Activated T-helper 1 cell treated with anti-CD3 and anti-CD28 coated beads, Interleukin-12 subunit alpha, Interleukin-12 subunit beta, Interleukin-2, Interleukin-4 antibody, amounts not matched to agents 30 ng/mL and 10 ng/mL and 1 ng/mL, durations not matched to agents 14 hours and 24 hours and 36 hours (primary cell): ENCODE measurements at regions of chr5 and their contacts with region 1.

Region 1: DNA sequence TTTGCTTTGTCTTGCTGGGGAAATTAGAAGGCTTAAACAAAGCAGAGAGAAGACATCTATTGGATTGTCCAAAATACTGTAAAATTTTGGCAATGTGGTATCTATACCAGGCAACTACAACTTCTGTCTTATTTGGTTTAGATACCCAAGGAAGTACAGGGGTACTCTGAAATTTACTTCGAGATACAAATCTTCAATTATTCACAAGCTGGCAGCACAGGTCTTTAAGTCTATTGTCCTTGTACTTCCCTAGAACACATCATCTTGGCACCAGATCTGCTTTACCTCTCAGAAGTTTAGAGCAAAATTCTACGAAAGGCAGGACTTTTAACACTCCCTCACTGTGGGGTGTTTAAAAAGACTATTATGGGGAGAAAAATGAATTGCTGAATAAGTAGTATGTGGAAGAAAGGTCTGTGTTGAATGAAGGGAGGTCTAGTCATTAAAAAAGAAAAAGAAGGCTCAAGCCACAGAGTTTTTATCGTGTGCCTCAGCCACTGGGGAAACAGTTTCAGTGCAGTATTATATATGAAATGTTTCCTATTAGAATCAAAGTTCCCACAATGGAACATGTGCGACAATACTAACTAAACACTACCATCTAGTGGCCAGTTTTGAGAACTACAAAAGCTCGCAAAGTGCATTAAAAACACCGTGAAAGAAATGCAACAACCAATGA is 93.7 kb downstream of the PDE4D start:
- DNase-seq: peak; percentile 15
- H3K4me3 Mint-ChIP-seq: no peak overlapping the region
- H3K27ac Mint-ChIP-seq: no peak overlapping the region
- H3K4me1 Mint-ChIP-seq: no peaks in the 10 kb centered on the region
- H3K27me3 Mint-ChIP-seq: peaks cover 11% of the 10 kb centered on the region

Region 2: GRCh38 chr5:59020611-59021285 is 779.1 kb before region 1 on chr5:
- intact Hi-C with region 1: loop called (anchors 10 kb)
- DNase-seq: no peak
- H3K4me3 Mint-ChIP-seq: peak overlapping the region; percentile 15
- H3K27ac Mint-ChIP-seq: peak overlapping the region; percentile 94
- H3K4me1 Mint-ChIP-seq: peaks cover 75% of the 10 kb centered on the region
- H3K27me3 Mint-ChIP-seq: no peaks in the 10 kb centered on the region

Region 3: DNA sequence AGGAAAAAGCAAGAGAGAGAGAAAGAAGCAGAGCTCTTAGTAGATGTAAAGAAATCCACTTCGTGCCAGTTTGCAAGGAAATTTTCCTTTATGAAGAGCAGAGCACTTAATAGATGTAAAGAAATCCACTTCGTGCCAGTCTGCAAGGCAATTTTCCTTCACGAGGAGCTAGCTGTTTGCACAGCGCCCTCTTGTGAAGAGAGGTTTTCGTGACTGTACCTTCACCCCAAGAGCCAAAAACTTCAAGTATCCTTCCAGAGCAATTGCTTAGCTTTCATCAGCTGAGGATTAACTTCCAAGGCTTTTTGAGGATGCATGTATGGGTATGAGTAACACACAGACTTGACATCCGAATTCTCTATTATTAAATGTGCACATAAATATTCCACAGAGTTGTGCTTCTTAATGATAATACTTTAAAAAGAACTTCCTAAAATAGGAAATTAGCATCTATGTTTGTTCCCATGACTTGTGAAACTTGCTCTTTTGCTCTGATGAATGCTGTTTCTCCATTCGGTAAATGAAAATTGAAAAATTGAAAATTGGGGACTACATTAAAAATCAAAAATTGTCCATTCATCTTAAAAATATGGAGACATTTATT is 431.9 kb before region 1 on chr5:
- intact Hi-C with region 1: no loop called
- DNase-seq: no peak
- H3K4me3 Mint-ChIP-seq: no peak overlapping the region
- H3K27ac Mint-ChIP-seq: no peak overlapping the region
- H3K4me1 Mint-ChIP-seq: no peaks in the 10 kb centered on the region
- H3K27me3 Mint-ChIP-seq: peaks cover 27% of the 10 kb centered on the region

Region 4: DNA sequence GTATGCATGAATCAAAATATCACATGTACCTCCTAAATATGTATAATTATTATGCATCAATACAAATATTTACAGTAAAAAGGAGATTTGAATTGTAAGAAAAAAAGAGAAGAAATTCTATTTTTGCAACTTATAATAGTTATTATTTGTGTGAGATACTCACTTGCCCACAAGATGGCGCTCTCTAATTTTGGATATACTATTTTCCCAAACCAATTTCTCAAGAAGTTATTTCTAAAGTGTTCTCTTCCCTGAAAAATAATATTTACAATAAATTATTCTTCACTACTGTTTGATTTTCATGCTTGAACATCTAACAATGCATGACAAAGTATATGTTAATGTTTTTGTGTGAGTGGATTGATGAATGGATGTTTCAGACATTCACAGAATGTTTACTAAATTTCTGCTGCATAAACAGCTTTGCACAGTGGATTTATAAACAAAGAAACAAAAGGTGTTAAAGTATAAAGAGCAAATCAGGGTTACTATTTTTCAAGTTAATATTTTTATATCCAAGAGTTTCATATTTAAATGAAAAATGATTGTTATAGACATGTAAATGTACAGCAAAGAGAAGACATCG is 409.6 kb before region 1 on chr5:
- intact Hi-C with region 1: loop called (anchors 1 kb)
- DNase-seq: no peak
- H3K4me3 Mint-ChIP-seq: no peak overlapping the region
- H3K27ac Mint-ChIP-seq: no peak overlapping the region
- H3K4me1 Mint-ChIP-seq: no peaks in the 10 kb centered on the region
- H3K27me3 Mint-ChIP-seq: peaks cover 20% of the 10 kb centered on the region

Region 5: DNA sequence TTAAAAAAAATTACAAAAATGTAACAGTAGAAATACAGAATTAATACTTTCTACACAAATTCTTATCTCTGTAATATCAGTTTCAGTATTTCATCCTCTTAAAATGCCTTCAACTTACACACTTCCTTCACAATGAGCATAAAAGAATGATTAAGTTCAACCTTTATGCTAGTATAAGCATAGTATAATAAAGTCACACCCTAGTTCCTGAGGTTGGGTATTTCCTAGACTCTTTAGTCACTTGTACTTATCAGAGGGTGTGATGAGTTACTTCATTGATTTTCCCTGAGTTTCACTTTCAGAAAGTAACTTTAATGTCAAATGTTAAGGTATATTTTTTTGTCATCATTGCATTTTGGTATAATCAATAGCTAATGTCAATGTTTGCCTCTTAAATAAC is 208.6 kb before region 1 on chr5:
- intact Hi-C with region 1: loop called (anchors 5 kb)
- DNase-seq: no peak
- H3K4me3 Mint-ChIP-seq: peak overlapping the region; percentile 30
- H3K27ac Mint-ChIP-seq: no peak overlapping the region
- H3K4me1 Mint-ChIP-seq: peaks cover 55% of the 10 kb centered on the region
- H3K27me3 Mint-ChIP-seq: peaks cover 13% of the 10 kb centered on the region

Region 6: DNA sequence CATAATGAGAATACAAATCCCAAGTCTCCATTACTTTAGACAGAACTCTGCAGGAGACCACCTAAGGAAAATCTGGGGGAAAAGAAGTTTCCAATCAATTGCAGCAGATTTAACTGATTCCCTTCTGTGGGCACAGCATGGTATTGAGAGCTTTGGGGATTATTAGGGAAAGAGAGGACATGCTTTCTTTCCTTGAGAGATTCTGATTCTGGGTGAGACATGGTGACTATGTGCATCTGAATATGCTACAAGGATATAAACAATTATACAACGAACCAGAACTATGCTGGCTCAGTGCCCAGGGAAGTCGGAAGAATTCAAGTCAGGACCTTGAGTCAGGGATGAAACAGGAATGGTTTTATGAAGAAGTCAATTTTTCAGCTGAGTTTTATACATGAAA is 90.0 kb before region 1 on chr5:
- intact Hi-C with region 1: no loop called
- DNase-seq: no peak
- H3K4me3 Mint-ChIP-seq: no peak overlapping the region
- H3K27ac Mint-ChIP-seq: no peak overlapping the region
- H3K4me1 Mint-ChIP-seq: no peaks in the 10 kb centered on the region
- H3K27me3 Mint-ChIP-seq: peaks cover 3% of the 10 kb centered on the region

Region 7: DNA sequence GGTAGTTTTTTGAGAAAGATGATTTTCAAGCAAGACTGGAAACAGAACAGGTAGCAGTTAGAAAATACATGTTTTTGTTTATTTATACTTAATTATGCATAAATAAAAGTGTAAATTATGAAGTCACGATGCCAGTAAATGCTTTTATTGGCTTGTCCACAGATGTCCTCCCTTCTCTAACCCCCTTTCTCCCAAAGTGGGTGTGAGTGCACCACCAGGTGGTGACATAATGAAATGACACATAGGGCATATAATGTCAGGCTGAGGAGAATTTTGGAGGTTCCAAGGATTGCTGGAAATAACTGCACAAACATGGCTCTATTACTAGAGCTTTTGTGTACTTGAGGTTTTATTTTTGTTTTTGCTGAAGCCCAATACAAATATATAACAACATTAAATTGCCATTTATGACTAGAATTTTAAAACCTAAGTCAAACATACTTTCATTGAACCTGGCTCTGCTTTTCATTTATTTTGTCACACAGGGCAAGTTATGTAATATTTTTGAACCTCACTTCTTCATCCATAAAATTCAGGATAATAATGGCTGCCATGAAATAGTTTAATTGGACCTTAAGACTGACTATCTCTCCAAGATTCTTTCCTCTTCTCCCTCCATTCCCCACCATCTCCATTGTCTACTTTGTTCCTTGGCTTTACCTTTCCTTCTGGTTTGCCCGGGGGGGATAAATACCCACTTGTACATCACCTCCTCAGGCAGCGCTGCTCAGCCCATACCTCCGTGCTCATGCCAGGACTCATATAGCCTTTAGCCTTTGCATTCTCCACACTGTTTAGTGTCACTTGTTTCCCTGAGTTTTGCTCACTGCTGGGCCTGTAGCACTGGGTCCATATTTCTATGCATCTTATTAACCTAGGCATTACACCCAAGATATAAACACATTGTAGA is 75.1 kb before region 1 on chr5:
- intact Hi-C with region 1: loop called (anchors 2 kb)
- DNase-seq: no peak
- H3K4me3 Mint-ChIP-seq: no peak overlapping the region
- H3K27ac Mint-ChIP-seq: no peak overlapping the region
- H3K4me1 Mint-ChIP-seq: no peaks in the 10 kb centered on the region
- H3K27me3 Mint-ChIP-seq: peaks cover 7% of the 10 kb centered on the region

Region 8: DNA sequence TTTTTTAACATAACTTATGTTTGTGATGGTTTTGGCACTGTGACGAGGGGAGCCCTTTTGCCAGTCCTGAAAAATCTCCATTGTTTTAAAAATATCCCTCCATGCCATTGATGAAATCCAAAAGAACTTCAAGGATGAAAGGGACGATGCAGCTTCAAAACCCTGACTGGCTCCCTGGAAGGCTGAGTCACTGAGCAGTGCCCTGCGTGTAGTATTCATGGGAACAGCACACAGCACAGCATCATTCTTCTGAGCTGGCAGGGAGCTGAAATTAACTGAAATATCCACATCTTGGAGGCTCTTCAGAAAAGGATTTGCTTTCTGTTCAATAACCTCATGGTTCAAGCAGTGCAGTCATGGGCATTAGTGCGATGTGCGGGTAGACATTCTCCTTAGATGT is 64.0 kb after region 1 on chr5:
- intact Hi-C with region 1: no loop called
- DNase-seq: no peak
- H3K4me3 Mint-ChIP-seq: no peak overlapping the region
- H3K27ac Mint-ChIP-seq: no peak overlapping the region
- H3K4me1 Mint-ChIP-seq: no peaks in the 10 kb centered on the region
- H3K27me3 Mint-ChIP-seq: no peaks in the 10 kb centered on the region